Activated CD8-positive, alpha-beta T cell treated with anti-CD3 and anti-CD28 coated beads for 36 hours (primary cell): ENCODE measurements at regions of chr11 and their contacts with region 1.

Region 1: DNA sequence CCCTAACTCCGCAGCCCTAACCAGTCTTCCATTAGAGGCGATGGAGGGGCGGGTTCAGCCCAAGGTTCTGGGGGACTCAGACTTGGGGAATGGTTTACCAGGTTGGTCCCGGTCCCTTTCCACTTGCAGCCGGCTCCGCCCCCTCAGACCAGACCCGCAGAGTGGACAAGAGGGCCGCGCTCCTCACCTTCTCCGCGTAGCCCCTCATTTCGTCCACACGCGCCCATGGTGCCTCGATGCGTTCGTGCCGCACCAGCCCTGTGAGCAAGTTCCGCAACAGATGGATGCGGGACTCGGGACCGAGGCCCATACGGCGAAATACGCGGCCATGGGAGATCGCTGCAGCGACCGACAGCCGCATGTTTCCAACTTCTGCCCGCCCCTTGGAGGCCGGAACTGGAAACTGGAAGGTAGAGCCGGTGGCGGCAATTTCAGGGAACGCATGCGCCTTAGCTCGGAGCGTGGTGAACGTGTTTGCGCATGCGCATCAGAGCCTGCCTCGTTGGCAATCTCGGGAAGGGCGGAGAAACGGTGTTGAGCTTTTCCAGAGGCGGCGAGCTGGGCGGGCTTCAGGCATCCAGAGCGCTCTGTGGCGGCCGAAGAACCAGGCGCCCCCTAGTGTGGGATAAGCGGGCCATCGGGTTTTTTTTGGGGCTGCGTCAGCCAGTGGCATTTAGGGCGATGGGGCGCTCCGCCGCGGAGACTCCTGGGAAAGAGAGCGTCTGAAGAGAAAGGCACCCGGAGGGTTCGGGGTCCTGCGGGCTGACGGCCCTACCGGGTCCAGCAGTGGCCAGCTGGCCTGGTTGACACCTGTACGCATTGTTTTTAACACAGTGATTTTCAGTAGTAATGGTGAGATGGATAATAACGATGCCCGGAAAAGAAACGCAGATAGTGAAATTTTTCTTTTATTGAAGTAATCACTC is at the start of gene MRPL17:
- DNase-seq: peak; percentile 99
- ATAC-seq: peak; percentile 96
- H3K4me3 Mint-ChIP-seq: peak within 1 kb of the TSS; percentile 97
- H3K27ac Mint-ChIP-seq: peak within 1 kb of the TSS; percentile 98
- H3K4me1 Mint-ChIP-seq: peaks cover 28% of the 10 kb centered on the region
- H3K27me3 Mint-ChIP-seq: no peaks in the 10 kb centered on the region
- CTCF ChIP-seq: peak; percentile 79
- total RNA-seq, gene MRPL17: 140 to 144 TPM

Region 2: DNA sequence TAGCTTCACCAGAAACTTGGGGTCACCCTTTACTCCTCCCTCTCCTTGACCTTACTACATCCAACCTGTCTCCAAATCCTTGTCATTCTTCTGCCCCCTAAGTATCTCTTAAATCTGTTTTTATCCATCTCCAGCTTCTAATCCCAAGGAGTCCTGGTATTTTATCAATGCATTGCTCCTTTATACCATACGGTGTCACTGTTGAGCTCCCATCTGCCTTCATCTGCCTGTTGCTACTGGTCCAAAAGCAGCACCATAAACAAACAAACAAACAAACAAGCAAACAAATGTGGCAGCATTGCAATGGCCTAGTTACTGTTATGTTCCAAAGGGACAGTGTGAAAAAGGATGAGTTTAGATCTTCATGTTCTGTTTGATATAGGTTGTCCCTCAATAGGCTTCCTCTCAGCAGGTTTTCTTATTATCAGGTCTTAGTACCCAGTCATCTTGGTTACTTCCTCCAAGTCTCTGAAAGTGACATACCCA is 151.9 kb before region 1 on chr11:
- CTCF ChIA-PET with region 1: interaction called, 18 read pairs
- POLR2A ChIA-PET with region 1: interaction called, 4 read pairs
- intact Hi-C with region 1: loop called (anchors 5 kb)
- DNase-seq: peak; percentile 22
- ATAC-seq: peak; percentile 69
- H3K4me3 Mint-ChIP-seq: no peak overlapping the region
- H3K27ac Mint-ChIP-seq: no peak overlapping the region
- H3K4me1 Mint-ChIP-seq: peaks cover 12% of the 10 kb centered on the region
- H3K27me3 Mint-ChIP-seq: no peaks in the 10 kb centered on the region
- CTCF ChIP-seq: peak; percentile 81

Region 3: DNA sequence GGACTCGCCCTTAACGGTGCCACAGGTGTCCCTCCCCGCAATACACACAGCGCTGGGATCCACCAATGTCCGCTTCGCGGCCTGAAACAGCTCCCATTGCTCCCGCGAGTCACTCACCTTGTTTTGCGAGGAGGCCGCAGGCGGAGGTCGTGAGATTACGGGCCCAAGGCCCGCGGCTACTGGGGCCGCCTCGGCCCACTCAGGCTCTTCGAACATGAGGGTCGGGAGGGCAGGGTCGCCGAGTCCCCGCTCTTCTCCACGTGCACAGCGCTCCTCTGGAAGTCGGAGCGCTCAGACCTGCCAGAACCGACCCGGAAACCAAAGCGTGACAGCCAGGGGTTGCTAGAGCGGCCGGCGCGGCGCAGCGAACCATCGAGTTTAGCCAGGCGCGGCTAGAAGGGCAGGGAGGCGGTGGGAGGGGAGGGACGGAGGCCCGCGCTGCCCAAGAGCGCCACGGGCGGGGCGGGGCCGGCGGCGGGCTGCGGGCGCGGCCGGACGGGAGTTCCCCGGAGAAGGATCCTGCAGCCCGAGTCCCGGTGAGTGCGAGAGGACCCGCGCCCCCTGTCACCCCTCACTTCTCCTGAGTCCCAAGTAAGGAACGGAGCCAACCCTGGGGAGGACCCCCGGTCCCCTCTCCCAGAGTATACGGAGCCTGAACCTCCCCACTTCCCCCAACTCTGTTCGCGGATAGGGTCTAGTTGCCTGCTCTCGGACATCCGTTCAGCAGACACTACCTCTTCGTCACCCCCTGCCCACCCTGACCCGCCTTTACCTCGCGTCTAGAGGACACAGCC is 79.7 kb before region 1 on chr11 and contains the starts of genes ILK and RRP8:
- CTCF ChIA-PET with region 1: interaction called, 32 read pairs
- POLR2A ChIA-PET with region 1: interaction called, 48 read pairs
- intact Hi-C with region 1: loop called (anchors 2 kb)
- DNase-seq: peak; percentile 90
- ATAC-seq: peak; percentile 81
- H3K4me3 Mint-ChIP-seq: no peak within 1 kb of the TSS
- H3K27ac Mint-ChIP-seq: no peak within 1 kb of the TSS
- H3K4me1 Mint-ChIP-seq: peaks cover 49% of the 10 kb centered on the region
- H3K27me3 Mint-ChIP-seq: no peaks in the 10 kb centered on the region
- CTCF ChIP-seq: no peak
- total RNA-seq, gene ILK: 70.6 to 71.7 TPM
- total RNA-seq, gene RRP8: 39.6 to 43.1 TPM

Region 4: DNA sequence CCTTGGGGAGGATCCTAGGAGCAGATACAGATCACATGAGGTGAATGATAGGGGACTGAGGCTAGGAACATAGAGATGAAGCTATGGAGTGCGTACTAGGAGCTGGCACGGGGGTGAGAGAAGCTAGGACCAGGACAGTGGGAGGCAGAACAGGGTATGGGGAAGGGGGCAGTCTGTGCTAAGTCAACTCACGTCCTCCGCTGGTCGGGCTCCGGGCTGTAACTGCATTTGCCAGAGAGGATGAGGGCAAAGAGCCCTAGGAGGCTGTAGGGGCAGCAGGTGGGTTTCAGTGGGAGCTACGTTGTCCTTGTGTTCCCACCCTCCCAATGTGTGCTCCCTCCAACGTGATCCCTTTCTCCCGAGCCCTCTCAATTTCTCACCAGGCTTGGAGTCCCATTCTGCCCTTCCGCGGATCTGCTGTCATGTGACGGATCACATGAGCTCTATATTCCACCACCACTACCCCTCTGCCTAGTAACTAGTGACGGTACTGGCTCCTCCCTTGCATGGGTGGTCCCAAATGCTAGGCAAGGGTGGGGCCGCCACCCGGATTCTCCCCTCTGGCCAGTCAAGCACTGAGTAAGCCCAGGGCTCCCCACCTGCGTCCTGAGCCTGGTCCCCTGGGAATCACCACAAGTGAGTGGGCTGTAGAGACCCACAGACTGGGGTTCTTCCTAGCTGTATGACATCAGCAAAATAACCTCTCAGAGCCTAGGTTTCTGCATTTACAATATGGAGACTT is 64.0 kb before region 1 on chr11 and contains the start of gene TPP1:
- CTCF ChIA-PET with region 1: interaction called, 21 read pairs
- POLR2A ChIA-PET with region 1: interaction called, 17 read pairs
- intact Hi-C with region 1: no loop called
- DNase-seq: peak; percentile 96
- ATAC-seq: peak; percentile 98
- H3K4me3 Mint-ChIP-seq: no peak within 1 kb of the TSS
- H3K27ac Mint-ChIP-seq: no peak within 1 kb of the TSS
- H3K4me1 Mint-ChIP-seq: peaks cover 3% of the 10 kb centered on the region
- H3K27me3 Mint-ChIP-seq: no peaks in the 10 kb centered on the region
- CTCF ChIP-seq: no peak
- total RNA-seq, gene TPP1: 28.1 to 31.4 TPM

Region 5: GRCh38 chr11:6693342-6694228 is 10.4 kb after region 1 on chr11:
- CTCF ChIA-PET with region 1: interaction called, 11 read pairs
- POLR2A ChIA-PET with region 1: no interaction called
- intact Hi-C with region 1: no loop called
- DNase-seq: peak; percentile 82
- ATAC-seq: peak; percentile 81
- H3K4me3 Mint-ChIP-seq: no peak overlapping the region
- H3K27ac Mint-ChIP-seq: peak overlapping the region; percentile 46
- H3K4me1 Mint-ChIP-seq: peaks cover 31% of the 10 kb centered on the region
- H3K27me3 Mint-ChIP-seq: no peaks in the 10 kb centered on the region
- CTCF ChIP-seq: no peak